Left lung (tissue), 14 donors: ENCODE measurements at regions of chr9 and their contacts with region 1.

Region 1: GRCh38 chr9:113591001-113591898 is 127.7 kb downstream of the RGS3 start:
- DNase-seq: peak in 3 of 4 donors; percentile 65 to 86 (median 84)
- ATAC-seq: peak; percentile 56
- H3K4me3 ChIP-seq: no peak overlapping the region
- H3K27ac ChIP-seq: peak overlapping the region; percentile 27 to 61
- H3K4me1 ChIP-seq: peaks cover 23 to 80% of the 10 kb centered on the region in 2 donors
- H3K27me3 ChIP-seq: no peaks in the 10 kb centered on the region
- CTCF ChIP-seq: peak; percentile 78 to 83

Region 2: DNA sequence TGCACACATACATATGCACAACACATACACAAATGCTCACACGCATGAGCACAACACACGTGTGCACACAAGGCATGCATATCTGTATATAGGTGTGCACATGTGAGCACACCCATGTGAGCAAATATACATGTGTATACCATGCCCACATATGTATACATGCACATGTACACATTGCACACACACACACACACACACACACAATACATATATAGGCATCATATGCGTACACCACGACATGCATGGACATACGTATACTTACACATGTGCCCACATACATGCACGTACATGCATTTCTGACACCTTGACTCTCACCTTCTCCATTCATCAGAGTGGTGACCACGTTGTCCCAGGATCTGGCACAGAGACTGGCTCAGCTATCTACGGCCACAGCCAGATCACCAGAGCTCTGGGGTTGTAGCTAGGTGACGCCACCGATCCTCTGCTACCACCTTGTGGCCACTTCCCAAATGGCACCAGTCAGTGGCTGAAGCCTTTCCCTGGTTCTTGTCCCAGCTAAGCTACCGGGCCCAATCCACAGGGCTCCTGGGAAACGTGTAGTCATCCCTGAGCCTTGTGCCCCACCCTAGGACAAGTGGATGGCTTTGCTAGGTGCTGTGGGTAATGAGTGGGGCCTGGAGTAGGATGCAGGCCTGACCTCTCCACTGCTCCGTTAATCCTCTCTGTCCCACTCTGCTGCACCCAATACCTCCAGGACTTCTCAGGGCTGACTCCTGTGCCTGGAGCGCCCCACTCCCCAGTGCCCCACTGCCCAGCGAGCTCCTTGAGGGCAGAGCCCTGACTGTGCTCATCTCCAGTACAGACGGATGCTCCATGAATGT is 66.7 kb after region 1 on chr9:
- intact Hi-C with region 1: loop called (anchors 5 to 10 kb)
- DNase-seq: peak; percentile 81 to 90 (median 86)
- ATAC-seq: peak; percentile 93
- H3K4me3 ChIP-seq: no peak overlapping the region
- H3K27ac ChIP-seq: no peak overlapping the region
- H3K4me1 ChIP-seq: peaks cover 17 to 44% of the 10 kb centered on the region in 2 donors
- H3K27me3 ChIP-seq: no peaks in the 10 kb centered on the region
- CTCF ChIP-seq: peak; percentile 89 to 99

Region 3: GRCh38 chr9:114518599-114519022 is 927.4 kb after region 1 on chr9:
- intact Hi-C with region 1: no loop called
- DNase-seq: peak in 1 of 4 donors; percentile 20
- ATAC-seq: no peak
- H3K4me3 ChIP-seq: no peak overlapping the region
- H3K27ac ChIP-seq: no peak overlapping the region
- H3K4me1 ChIP-seq: no peaks in the 10 kb centered on the region
- H3K27me3 ChIP-seq: peaks cover 0 to 18% of the 10 kb centered on the region in 2 donors
- CTCF ChIP-seq: no peak